ENCODE measurements at regions of chr3 and their contacts with region 1.

Region 1: DNA sequence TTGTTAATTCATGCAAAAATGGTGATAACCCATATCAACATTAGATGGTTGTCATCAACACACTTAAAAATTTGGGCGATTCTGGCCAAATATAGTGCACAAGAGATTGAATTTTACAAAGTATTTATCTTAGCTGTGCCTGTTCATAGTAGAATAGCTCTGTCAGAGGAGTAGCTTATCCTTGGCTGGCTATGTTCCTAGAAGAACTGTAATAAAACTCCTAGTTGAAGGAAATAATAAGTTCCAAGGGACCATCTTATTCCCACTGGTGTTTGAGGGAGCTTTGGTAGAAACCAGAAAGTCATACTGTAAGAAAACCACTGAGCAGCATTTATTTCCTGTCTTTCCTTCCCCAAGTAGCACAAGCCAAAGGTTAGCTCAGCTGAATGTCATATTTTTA is 201.8 kb downstream of the GRM7 start:
- DNase-seq: no peak

Region 2: DNA sequence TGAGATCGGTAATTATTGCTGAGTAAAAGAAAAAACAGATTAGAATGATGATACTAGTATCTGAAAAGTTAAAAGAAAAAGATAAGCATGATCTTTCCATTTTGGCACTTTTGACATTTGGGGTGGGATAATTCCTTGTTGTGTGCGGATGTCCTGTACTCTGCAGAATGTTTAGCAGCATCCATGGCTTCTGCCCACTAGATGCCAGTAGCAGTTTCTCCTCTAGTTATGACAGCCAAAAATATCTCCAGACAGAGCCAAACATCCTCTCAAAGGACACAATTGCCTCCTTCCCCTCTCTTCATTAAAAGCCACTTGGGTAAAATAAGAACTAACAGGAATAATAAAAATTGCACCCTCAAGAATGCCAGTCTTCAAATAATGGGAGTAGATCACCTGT is 670.6 kb before region 1 on chr3:
- intact Hi-C with region 1: loop called in 1 of 2 experiments (anchors 10 kb)
- DNase-seq: no peak